Adrenal gland (tissue), 19 donors: ENCODE measurements at regions of chr16 and their contacts with region 1.

Region 1: DNA sequence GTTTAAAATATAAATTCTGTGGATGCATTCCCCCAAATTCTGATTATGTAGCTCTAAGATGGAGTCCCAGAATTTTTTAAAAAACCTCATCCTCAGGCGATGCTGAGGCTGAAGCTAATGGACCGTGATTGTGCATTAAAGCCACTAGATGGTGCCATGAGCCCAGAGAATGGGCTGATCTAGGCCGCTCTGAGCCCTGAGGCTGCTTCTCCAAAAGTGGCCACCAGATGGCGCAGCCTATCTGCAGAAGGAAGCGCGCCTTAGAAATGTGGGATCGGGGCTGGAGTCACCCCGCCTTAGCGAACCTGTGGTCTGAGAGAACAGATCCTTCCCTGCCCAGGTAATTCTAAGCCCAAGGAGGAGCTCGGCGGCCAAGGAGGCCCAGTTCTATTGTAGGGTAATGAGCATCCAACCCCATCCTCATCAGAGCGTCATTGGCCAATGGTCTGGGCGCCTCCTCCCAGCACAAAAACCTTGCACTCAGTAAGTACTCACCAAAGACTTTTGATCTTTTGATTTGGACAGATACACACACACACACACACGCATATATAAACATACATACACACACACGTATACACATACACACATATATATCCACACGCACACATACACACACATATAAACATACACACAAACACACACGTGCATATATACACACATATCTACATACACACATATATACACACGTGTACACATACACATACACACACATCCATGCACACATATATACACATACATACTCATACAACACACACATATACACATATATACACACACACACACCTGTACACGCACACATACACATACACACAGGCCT is 13.7 kb upstream of the MMP2 start:
- DNase-seq: peak; percentile 79 to 97 (median 90)
- H3K4me3 ChIP-seq: no peak overlapping the region
- H3K27ac ChIP-seq: no peak overlapping the region
- H3K4me1 ChIP-seq: no peaks in the 10 kb centered on the region
- H3K27me3 ChIP-seq: no peaks in the 10 kb centered on the region
- CTCF ChIP-seq: peak; percentile 100
- POLR2A ChIP-seq: peak in 1 of 2 donors; percentile 28

Region 2: DNA sequence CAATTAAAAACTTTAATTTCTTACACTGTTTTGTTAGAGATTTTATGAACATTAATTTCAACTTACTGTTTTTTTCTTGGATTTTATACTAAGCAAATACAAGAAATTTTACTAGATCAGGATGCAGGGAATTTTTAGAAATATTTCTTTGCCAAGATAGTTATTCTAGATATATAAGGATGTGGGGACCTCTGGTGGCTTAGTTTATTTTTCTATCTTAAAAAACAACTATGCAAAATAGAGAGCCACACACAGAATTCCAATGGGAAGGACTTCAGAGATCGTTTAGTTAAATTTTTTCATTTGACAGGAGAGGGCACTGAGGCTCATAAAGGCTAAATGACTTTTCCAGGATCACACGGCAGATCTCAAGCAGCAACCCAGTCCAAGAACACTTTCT is 78.2 kb after region 1 on chr16:
- intact Hi-C with region 1: loop called (anchors 2 to 5 kb)
- DNase-seq: no peak
- H3K4me3 ChIP-seq: no peak overlapping the region
- H3K27ac ChIP-seq: no peak overlapping the region
- H3K4me1 ChIP-seq: peaks cover 0 to 11% of the 10 kb centered on the region in 2 donors
- H3K27me3 ChIP-seq: no peaks in the 10 kb centered on the region
- CTCF ChIP-seq: peak in 5 of 6 experiments; percentile 46 to 72 (median 59)
- POLR2A ChIP-seq: no peak

Region 3: DNA sequence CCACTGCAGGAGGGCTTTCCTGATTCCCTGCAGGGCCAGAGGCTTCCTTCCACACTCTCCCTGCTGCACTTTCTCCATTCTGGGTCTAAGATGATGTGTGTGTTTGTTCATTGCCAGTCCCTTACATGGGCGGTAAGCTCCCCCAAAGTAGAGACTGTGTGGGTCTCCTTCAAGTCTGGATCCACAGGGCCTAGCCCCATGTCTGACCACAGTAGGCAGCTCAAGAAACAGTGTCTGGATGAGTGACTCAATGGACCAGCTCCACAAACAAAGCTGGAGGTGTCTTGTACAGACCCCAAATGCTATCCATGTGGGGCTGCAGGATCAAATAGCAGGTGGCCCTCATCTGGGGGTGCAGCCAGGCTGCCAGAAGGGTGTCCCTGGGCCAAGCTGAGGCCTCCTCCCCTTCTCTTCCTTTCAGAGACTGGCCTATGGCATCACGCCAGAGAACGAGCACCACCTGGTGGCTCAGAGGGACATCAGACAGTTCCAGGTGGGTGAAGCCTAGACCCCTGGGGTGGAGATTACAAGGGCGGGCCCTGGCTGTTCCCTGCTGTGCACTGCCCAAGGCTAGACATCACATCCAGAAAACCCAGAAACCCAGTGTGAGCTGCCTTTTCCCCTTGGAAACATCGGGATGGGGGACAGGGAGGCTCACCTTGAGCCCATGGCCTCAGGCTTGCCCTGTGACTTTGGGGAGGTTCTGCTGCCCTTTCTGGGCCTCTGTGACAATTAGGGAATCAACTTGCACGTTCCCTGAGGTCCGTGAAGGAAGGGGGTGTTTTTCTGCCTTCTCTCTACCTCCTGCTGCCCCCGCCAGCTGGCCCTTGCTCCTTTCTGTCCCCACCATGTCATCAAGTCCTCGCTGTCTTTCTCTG is 236.4 kb after region 1 on chr16:
- intact Hi-C with region 1: loop called (anchors 2 to 5 kb)
- DNase-seq: peak; percentile 45 to 80 (median 64)
- H3K4me3 ChIP-seq: no peak overlapping the region
- H3K27ac ChIP-seq: no peak overlapping the region
- H3K4me1 ChIP-seq: no peaks in the 10 kb centered on the region
- H3K27me3 ChIP-seq: no peaks in the 10 kb centered on the region
- CTCF ChIP-seq: peak; percentile 28 to 74 (median 57)
- POLR2A ChIP-seq: no peak

Region 4: DNA sequence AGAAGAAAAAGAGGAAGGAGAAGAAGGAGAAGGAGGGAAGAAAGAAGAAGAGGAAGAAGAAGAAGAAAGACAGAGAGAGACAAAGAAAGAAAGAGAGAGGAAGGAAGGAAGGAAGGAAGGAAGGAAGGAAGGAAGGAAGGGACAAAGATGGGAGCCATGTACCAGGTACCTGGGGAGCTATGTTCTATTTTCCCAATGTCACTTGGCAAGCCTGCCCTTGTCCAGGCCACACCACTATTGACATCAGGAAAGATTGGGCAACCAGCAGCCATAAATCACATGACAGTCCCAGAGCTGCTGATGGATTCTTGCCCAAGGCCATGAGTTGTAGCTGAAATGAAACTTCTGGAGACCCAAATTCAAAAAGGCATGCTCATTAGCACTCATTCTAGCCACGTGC is 370.3 kb after region 1 on chr16:
- intact Hi-C with region 1: loop called in 1 of 2 experiments (anchors 5 kb)
- DNase-seq: peak; percentile 71 to 92 (median 83)
- H3K4me3 ChIP-seq: no peak overlapping the region
- H3K27ac ChIP-seq: peak overlapping the region in 2 of 5 donors; percentile 19 to 63
- H3K4me1 ChIP-seq: peaks cover 7 to 10% of the 10 kb centered on the region in 2 donors
- H3K27me3 ChIP-seq: no peaks in the 10 kb centered on the region
- CTCF ChIP-seq: no peak
- POLR2A ChIP-seq: no peak

Region 5: GRCh38 chr16:55849536-55849935 is 384.2 kb after region 1 on chr16:
- intact Hi-C with region 1: loop called in 1 of 2 experiments (anchors 5 kb)
- DNase-seq: no peak
- H3K4me3 ChIP-seq: no peak overlapping the region
- H3K27ac ChIP-seq: no peak overlapping the region
- H3K4me1 ChIP-seq: no peaks in the 10 kb centered on the region
- H3K27me3 ChIP-seq: peaks cover 18% of the 10 kb centered on the region
- CTCF ChIP-seq: no peak
- POLR2A ChIP-seq: no peak